ENCODE measurements at regions of chr6 and their contacts with region 1.

Region 1: GRCh38 chr6:155340464-155341129 is 26.3 kb upstream of the TFB1M start:
- DNase-seq: no peak
- ATAC-seq: no peak
- H3K4me3 ChIP-seq: no peak overlapping the region
- H3K27ac ChIP-seq: no peak overlapping the region
- H3K4me1 ChIP-seq: no peaks in the 10 kb centered on the region
- H3K27me3 ChIP-seq: no peaks in the 10 kb centered on the region
- CTCF ChIP-seq: no peak
- POLR2A ChIP-seq: no peak

Region 2: GRCh38 chr6:155523821-155524651 is 183.4 kb after region 1 on chr6:
- intact Hi-C with region 1: loop called in 1 of 10 experiments (anchors 5 kb)
- DNase-seq: no peak
- ATAC-seq: no peak
- H3K4me3 ChIP-seq: no peak overlapping the region
- H3K27ac ChIP-seq: no peak overlapping the region
- H3K4me1 ChIP-seq: peaks cover 0 to 7% (median 4%) of the 10 kb centered on the region in 12 donors
- H3K27me3 ChIP-seq: no peaks in the 10 kb centered on the region
- CTCF ChIP-seq: no peak
- POLR2A ChIP-seq: no peak

Region 3: DNA sequence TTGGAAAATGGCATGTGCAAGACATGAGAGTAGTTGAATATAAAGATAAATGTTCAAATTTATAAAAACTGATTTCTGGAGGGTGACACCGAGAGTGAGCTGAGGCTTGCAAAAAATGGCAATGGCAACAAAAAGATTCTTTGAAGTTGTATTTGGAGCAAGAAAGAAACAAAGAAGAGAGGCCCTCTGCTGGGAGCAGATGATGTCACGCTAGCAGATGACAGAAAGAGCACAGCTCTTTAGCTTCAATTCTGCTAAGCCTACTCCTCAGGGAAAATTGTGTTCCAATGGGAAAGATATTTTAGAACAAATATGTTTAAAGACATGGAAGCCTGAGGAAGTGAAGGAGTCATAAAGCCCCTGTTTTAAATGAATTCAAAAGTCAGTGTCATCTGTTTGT is 240.3 kb after region 1 on chr6:
- intact Hi-C with region 1: no loop called
- DNase-seq: no peak
- ATAC-seq: no peak
- H3K4me3 ChIP-seq: no peak overlapping the region
- H3K27ac ChIP-seq: no peak overlapping the region
- H3K4me1 ChIP-seq: no peaks in the 10 kb centered on the region
- H3K27me3 ChIP-seq: no peaks in the 10 kb centered on the region
- CTCF ChIP-seq: no peak
- POLR2A ChIP-seq: no peak

Region 4: DNA sequence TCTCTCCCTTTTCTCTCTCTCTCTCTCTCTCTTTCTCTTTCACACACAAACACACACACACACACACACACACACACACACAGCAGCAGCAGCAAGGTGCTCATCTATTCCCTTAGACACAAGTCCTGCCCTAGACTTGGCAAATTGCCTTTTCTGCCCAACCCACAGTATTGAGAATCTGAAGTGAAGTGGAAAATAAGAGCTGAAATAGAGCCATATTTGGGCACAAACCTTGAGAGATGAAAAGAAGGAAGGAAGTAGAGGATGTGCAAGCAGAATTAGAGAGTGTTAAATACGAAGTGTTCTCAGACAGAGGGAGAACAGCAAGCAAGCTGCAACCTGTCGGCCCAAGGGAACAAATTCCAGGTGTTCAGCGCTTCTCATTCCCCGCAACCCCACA is 672.6 kb after region 1 on chr6:
- intact Hi-C with region 1: no loop called
- DNase-seq: no peak
- ATAC-seq: no peak
- H3K4me3 ChIP-seq: no peak overlapping the region
- H3K27ac ChIP-seq: no peak overlapping the region
- H3K4me1 ChIP-seq: no peaks in the 10 kb centered on the region
- H3K27me3 ChIP-seq: no peaks in the 10 kb centered on the region
- CTCF ChIP-seq: no peak
- POLR2A ChIP-seq: no peak

Region 5: DNA sequence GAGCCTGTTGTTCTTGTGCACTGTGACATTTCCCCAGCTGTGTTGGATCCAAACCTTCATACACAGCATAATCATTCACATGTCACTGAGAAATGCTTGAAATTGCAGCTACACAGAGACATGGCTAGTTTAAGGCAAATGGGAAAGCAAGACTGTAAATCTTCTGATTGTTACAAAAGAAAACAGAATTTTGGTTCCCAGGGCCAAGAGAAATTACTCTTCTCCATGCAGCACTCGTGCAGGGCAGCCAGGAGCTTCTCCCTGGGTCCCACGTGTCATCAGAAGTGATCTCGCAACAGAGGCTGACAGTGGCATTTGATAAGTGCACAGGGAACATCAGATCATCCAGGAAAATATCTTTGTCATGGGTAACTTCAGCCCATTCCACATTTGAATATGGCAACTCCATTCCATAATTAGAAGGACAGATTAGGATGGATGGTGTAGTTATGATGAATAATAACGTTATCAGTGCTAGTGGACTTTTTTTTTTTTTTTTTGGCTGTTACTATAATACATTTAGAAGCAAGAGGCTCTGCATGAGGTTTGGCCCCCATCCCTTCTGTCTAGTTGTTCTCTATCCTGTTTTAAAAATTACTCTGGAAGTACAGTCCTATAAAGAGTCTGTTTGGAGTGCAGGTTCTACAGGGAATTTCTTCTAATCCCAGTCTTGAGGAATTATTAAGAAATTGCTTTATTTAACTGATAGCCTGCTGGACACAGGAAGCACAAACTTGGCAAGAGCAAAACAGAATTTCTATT is 686.1 kb after region 1 on chr6:
- intact Hi-C with region 1: no loop called
- DNase-seq: no peak
- ATAC-seq: no peak
- H3K4me3 ChIP-seq: no peak overlapping the region
- H3K27ac ChIP-seq: no peak overlapping the region
- H3K4me1 ChIP-seq: peaks cover 0 to 3% (median 0%) of the 10 kb centered on the region in 12 donors
- H3K27me3 ChIP-seq: no peaks in the 10 kb centered on the region
- CTCF ChIP-seq: no peak
- POLR2A ChIP-seq: no peak